ENCODE measurements at regions of chr5 and their contacts with region 1.

Region 1: DNA sequence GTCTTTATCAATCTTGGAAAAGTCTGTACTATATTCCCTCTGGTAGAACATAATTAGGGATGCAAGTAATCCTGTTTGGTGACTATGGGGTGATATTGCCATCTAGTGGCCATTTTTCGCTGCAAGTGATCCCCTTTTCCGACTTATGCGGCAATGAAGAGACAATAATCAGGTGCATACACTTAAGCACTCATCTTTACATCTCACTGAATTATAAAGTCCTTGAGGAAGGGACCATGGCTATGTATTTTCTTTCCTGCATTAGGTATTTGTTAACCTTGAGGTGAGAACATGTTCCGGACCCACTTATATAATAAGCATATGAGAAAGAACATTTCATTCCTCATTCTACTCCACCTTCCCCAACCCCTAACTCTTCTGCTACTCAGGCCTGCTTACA is 19.6 kb upstream of the LIX1 start:
- H3K4me3 Mint-ChIP-seq: no peak overlapping the region
- H3K27ac Mint-ChIP-seq: no peak overlapping the region
- H3K4me1 Mint-ChIP-seq: no peaks in the 10 kb centered on the region
- H3K27me3 Mint-ChIP-seq: no peaks in the 10 kb centered on the region

Region 2: GRCh38 chr5:96752341-96753016 is 409.6 kb before region 1 on chr5:
- intact Hi-C with region 1: loop called (anchors 2 kb)
- H3K4me3 Mint-ChIP-seq: no peak overlapping the region
- H3K27ac Mint-ChIP-seq: no peak overlapping the region
- H3K4me1 Mint-ChIP-seq: no peaks in the 10 kb centered on the region
- H3K27me3 Mint-ChIP-seq: no peaks in the 10 kb centered on the region

Region 3: GRCh38 chr5:96868603-96869371 is 293.3 kb before region 1 on chr5:
- intact Hi-C with region 1: loop called (anchors 1 kb)
- H3K4me3 Mint-ChIP-seq: no peak overlapping the region
- H3K27ac Mint-ChIP-seq: no peak overlapping the region
- H3K4me1 Mint-ChIP-seq: no peaks in the 10 kb centered on the region
- H3K27me3 Mint-ChIP-seq: peaks cover 1% of the 10 kb centered on the region

Region 4: DNA sequence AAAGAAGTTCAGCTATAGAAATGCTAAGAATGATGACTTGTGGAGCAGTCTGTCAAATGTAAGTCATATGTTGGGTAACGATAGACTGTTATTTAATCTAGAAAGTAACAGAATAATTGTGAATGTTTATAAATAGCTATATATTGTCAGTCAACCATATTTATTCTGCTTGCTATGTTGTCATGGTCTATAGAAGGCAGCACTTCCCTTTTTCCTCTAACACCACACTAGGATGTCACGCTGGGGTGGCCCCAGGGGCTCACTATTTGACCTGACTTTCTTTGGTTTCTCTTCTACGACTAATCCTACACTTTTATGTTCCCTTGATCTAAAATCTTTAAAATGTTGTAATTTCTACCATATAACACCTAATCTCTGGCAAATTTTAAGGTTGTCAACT is 265.2 kb before region 1 on chr5:
- intact Hi-C with region 1: no loop called
- H3K4me3 Mint-ChIP-seq: peak overlapping the region; percentile 70
- H3K27ac Mint-ChIP-seq: peak overlapping the region; percentile 89
- H3K4me1 Mint-ChIP-seq: peaks cover 14% of the 10 kb centered on the region
- H3K27me3 Mint-ChIP-seq: no peaks in the 10 kb centered on the region

Region 5: GRCh38 chr5:96997265-96997859 is 164.7 kb before region 1 on chr5:
- intact Hi-C with region 1: loop called (anchors 1 kb)
- H3K4me3 Mint-ChIP-seq: no peak overlapping the region
- H3K27ac Mint-ChIP-seq: no peak overlapping the region
- H3K4me1 Mint-ChIP-seq: no peaks in the 10 kb centered on the region
- H3K27me3 Mint-ChIP-seq: no peaks in the 10 kb centered on the region

Measured in dendritic cell treated with granulocyte-macrophage colony-stimulating factor and Interleukin-4, amounts not matched to agents 40 ng/mL and 50 ng/mL, for 4 days (primary cell).